Posterior vena cava (tissue), 2 donors: ENCODE measurements at regions of chr16 and their contacts with region 1.

Region 1: DNA sequence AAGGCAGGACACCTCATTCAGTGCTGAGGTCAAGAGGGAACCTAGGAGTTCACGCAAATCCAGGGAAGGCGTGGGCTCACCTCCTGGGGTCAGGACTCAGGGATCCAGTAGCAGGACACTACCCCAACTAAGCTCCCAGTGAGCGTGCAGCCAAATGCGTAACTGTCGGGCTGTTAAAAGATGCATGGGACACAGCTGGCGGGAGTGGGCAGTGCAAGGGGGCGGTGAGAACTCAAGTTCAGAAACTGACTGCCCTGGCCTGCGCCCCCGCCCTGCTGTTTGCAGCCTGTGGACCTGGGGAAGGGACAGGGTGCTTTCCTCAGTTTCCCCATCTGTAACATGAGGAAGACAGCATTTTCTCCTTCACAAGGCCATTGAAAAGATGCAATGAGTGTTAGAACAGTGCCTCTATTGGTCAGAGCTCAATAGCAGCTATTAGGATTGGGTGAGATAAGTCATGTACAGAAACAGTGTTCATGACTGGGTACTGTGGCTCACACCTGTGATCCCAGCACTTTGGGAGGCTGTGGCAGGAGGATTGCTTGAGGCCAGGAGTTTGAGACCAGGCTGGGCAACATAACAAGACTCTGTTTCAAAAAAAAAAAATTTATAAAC is 20.2 kb downstream of the CDIPT start:
- DNase-seq: no peak

Region 2: DNA sequence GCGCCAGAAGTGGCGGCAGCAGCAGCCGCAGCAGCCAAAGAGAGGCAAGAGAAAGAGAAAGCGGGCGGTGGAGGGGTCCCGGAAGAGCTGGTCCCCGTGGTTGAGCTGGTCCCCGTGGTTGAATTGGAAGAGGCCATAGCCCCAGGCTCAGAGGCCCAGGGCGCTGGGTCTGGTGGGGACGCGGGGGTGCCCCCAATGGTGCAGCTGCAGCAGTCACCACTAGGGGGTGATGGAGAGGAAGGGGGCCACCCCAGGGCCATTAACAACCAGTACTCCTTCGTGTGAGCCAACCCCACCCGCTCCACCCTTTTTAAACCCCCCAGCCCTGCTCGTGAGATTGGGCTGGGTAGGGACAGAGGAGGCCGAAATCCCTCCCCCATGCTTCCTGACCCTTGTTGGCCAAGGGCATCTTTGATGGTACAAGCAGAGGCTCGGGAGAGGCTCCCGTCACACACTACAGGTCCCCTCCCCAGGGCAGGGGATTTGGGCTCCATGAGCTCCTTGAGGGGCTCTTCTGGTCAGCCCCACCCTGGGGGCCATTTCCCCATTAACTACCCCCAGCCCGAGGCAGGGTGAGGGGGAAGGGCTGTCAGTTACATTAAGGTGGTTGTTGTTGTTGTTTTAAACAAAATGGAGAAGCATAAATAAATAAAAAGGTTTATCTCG is 969.2 kb before region 1 on chr16:
- intact Hi-C with region 1: no loop called
- DNase-seq: no peak

Region 3: GRCh38 chr16:29825145-29826044 is 17.4 kb before region 1 on chr16:
- intact Hi-C with region 1: loop called in 1 of 2 experiments (anchors 2 kb)
- DNase-seq: peak; percentile 90